ENCODE measurements at regions of chr4 and their contacts with region 1.

Region 1: DNA sequence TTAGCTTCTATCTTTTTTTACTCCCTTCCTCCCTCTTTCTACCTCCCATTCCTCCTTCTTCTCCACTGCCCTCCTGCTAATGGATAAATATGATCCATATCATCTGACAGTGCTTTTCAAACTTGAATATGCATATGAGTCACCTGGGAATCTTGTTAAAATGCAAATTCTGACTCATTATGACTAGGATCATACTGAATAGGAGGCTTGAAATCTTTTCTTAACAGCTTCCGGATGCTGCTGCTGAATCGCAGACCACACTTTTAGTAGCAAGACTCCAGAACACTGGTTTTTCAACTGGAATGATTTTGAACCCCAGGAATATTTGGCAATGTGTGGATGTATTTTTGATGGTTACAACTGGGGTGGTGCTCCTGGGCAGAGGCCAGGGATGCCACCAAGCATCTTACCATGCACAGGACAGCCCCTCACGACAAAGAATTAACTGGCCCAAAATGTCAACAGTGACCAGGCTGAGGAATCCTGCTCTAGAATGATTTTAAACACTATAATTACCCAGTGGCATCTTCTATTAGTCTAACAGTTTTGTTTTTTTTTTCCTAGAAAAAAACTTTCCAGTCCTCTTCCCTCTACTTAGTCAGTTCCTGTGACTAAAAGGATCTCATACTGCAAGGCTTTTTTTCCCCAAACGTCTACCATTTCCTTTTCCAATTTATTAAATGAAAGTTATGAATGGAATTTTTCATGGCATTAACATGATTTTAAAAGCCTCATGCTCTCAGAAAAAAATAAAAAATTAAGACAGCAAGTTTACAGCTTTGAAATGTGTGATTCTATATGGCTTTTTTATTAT is 10.6 kb upstream of the PYURF start:
- DNase-seq: no peak
- H3K4me3 Mint-ChIP-seq: no peak overlapping the region
- H3K27ac Mint-ChIP-seq: no peak overlapping the region
- H3K4me1 Mint-ChIP-seq: no peaks in the 10 kb centered on the region
- H3K27me3 Mint-ChIP-seq: peaks cover 3% of the 10 kb centered on the region

Region 2: GRCh38 chr4:87856816-87857215 is 677.3 kb before region 1 on chr4:
- CTCF ChIA-PET with region 1: no interaction called
- DNase-seq: no peak
- H3K4me3 Mint-ChIP-seq: no peak overlapping the region
- H3K27ac Mint-ChIP-seq: no peak overlapping the region
- H3K4me1 Mint-ChIP-seq: no peaks in the 10 kb centered on the region
- H3K27me3 Mint-ChIP-seq: peaks cover 24% of the 10 kb centered on the region

Region 3: DNA sequence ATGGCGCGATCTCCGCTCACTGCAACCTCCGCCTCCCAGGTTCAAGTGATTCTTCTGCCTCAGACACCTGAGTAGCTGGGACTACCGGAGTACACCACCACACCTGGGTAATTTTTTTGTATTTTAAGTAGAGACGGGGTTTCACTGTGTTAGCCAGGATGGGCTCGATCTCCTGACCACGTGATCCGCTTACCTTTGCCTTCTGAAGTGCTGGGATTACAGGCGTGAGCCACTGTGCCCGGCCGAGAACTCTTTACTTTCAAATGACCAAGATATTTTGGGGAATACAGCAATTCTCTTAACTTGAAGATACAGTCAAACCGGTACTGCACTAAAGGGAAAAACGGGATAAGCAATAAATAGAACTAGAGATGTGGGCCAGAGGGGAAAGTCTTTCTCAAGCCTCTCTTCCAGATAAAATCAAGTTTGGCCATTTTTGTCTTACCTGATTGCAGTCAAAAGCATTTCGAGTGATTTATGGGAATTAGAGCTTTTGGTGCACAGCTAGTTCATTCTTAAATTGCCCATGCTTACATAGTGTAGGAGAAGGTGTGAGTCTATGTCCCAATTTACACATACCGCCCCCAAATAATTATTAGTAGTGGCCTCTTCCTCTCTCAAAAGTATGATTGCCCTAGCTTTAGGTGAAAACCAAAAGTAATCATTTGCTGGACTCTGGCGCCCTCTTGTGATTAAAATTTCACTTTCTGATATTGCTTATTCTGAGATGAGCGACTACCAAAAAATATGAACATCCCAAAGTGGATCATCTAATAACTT is 322.5 kb before region 1 on chr4:
- CTCF ChIA-PET with region 1: no interaction called
- DNase-seq: peak; percentile 61
- H3K4me3 Mint-ChIP-seq: no peak overlapping the region
- H3K27ac Mint-ChIP-seq: no peak overlapping the region
- H3K4me1 Mint-ChIP-seq: no peaks in the 10 kb centered on the region
- H3K27me3 Mint-ChIP-seq: peaks cover 7% of the 10 kb centered on the region

Region 4: GRCh38 chr4:88523325-88524129 is 10.6 kb before region 1 on chr4 and contains the start of gene PYURF:
- CTCF ChIA-PET with region 1: interaction called, 17 read pairs
- DNase-seq: peak; percentile 84
- H3K4me3 Mint-ChIP-seq: peak within 1 kb of the TSS; percentile 95
- H3K27ac Mint-ChIP-seq: peak within 1 kb of the TSS; percentile 81
- H3K4me1 Mint-ChIP-seq: peaks cover 49% of the 10 kb centered on the region
- H3K27me3 Mint-ChIP-seq: no peaks in the 10 kb centered on the region

Region 5: DNA sequence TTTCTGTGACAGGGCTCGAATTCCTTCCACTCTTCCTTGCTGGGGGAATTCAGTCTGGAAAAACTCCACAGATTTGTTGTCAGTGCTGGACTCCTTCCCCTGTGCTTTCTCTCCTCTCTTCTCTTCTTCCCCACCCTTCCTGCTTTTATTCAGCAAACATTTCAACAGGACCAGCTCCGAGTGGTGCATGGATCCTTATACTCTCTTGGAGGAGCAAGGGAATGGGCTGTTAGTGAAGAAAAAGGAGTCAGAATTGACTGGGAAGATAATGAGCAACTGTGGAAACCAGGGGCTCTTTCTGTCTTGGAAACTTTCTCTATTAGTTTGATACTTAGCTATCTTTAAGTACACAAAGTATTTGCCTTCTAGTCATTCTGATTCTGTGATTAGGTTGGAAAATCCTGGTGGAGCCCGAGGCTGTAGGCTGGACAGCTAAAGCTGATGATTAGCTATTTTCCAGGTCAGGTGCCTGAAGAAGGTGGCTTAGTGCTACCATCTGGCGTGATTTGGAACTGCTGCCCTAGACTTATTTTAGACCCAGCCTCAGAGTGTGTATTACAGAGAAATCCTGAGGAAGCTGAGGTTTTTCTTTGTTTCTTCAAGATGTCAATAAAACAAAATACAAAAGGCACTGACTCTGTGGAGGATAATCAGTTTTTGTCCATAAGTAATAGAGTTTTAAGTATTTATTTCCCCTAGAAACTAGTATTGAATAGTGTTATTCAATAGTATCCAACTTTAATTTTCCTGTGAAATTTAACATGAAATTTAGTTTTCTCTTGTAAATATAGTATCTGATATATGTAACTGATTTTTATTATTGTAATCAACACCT is 125.1 kb after region 1 on chr4:
- CTCF ChIA-PET with region 1: interaction called, 85 read pairs
- DNase-seq: peak; percentile 54
- H3K4me3 Mint-ChIP-seq: no peak overlapping the region
- H3K27ac Mint-ChIP-seq: no peak overlapping the region
- H3K4me1 Mint-ChIP-seq: peaks cover 12% of the 10 kb centered on the region
- H3K27me3 Mint-ChIP-seq: no peaks in the 10 kb centered on the region

Region 6: GRCh38 chr4:88792268-88792781 is 258.2 kb after region 1 on chr4:
- CTCF ChIA-PET with region 1: interaction called, 11 read pairs
- DNase-seq: no peak
- H3K4me3 Mint-ChIP-seq: no peak overlapping the region
- H3K27ac Mint-ChIP-seq: no peak overlapping the region
- H3K4me1 Mint-ChIP-seq: peaks cover 13% of the 10 kb centered on the region
- H3K27me3 Mint-ChIP-seq: peaks cover 3% of the 10 kb centered on the region

Region 7: GRCh38 chr4:88908003-88908402 is 373.9 kb after region 1 on chr4:
- CTCF ChIA-PET with region 1: no interaction called
- DNase-seq: no peak
- H3K4me3 Mint-ChIP-seq: no peak overlapping the region
- H3K27ac Mint-ChIP-seq: no peak overlapping the region
- H3K4me1 Mint-ChIP-seq: no peaks in the 10 kb centered on the region
- H3K27me3 Mint-ChIP-seq: no peaks in the 10 kb centered on the region

Region 8: DNA sequence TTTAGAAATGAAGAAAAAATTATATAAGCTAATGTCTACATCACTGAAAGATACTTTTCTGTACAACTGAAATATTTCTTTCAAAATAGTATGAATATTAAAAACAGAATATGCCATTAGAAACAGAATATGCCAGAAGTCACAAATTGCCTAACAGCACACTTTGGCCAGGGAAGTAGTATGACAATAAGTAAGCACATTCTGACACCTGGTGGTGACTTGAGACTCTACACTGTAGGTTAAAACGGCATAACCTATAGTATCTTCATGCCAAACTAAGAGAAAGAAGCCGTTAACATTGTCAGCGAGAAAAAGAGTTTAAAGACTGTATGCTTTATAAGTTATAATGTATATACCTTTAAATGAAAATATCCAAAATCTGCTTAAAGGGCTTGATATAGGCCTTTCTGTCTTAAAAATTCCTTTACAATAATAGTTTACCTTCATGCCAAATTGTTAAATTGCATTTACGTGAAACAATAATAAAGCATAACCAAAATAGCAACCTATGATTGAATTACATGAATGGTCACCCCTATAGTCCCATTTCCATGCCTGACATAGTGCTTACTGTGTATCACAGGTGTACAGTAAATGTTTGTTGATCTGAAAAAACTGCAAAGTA is 490.0 kb after region 1 on chr4:
- CTCF ChIA-PET with region 1: interaction called, 24 read pairs
- DNase-seq: peak; percentile 68
- H3K4me3 Mint-ChIP-seq: no peak overlapping the region
- H3K27ac Mint-ChIP-seq: no peak overlapping the region
- H3K4me1 Mint-ChIP-seq: peaks cover 24% of the 10 kb centered on the region
- H3K27me3 Mint-ChIP-seq: no peaks in the 10 kb centered on the region

Measured in activated naive CD4-positive, alpha-beta T cell treated with anti-CD3 and anti-CD28 coated beads, Interleukin-2, amount 10 ng/mL, durations not matched to agents 7 days and 5 days (primary cell).